ENCODE measurements at regions of chr6 and their contacts with region 1.

Region 1: DNA sequence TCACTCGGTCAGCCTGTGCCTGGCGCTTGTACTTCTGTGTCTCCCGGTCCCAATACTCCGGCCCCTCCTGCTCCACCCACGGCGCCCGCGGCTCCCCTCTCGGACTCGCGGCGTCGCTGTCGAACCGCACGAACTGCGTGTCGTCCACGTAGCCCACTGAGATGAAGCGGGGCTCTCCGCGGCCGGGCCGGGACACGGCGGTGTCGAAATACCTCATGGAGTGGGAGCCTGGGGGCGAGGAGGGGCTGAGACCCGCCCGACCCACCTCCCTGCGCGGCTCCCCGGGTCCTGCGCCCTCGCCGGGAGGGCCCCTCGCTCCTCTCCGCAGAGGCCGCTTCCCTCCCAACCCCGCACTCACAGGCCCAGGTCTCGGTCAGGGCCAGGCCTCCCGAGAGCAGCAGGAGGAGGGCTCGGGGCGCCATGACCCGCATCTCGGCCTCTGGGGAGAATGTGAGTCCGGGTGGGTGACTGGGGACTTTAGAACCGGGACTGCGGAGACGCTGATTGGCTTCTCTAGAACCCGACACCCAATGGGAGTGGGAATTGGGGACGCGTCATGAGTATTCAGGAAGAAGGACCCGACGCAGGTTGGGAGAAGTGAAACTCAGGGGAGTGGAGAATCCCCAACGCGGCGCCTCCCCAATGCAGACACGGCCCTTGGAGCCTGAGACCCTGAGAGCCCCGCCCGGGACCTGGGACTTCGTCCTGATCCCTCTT is at the start of gene HLA-C:
- DNase-seq: peak; percentile 95
- ATAC-seq: peak; percentile 88
- H3K4me3 ChIP-seq: peak within 1 kb of the TSS; percentile 83
- H3K27ac ChIP-seq: peak within 1 kb of the TSS; percentile 95
- H3K4me1 ChIP-seq: peaks cover 21% of the 10 kb centered on the region
- H3K27me3 ChIP-seq: no peaks in the 10 kb centered on the region
- CTCF ChIP-seq: peak in 1 of 3 experiments; percentile 10; a peak in 1 of 6 replicates
- EP300 ChIP-seq: no peak
- POLR2A ChIP-seq: peak; percentile 95
- RAD21 ChIP-seq: peak; percentile 30; the same call in 1 of the 2 replicates
- polyA plus RNA-seq, gene HLA-C: 121 to 379 TPM

Region 2: DNA sequence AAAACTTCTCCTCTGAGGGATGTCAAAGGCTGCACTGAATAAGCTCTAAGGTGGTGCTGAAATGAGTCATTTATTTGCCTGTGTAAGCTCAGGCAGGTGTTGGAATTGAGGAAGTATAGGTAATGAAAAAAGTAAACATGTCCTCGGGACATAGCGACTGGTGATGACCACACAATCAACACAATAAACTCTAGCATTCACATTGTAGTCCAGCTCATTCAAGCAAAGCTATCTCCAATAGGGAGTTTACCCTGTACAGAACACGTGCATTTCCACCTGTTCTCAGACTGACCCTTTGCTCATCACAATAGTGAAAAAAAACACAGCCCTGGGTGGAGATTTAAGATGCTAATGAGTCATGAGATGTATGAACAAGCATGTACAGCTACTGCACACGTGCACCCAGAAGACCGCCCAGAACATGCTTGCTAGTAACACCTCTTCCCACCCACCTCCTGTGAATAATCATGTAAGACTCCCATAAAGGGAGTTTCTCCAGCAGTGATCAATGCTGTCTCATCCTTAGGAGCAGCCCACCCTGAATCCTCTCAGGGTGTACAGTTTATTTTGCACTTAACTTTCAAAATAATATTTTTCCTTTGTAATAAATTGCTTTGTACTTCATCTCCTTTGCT is 68.3 kb before region 1 on chr6:
- CTCF ChIA-PET with region 1: no interaction called
- POLR2A ChIA-PET with region 1: interaction called, 3 read pairs
- RAD21 ChIA-PET with region 1: interaction called, 4 read pairs
- SMC1A ChIA-PET with region 1: interaction called, 10 read pairs
- in situ Hi-C with region 1: loop called (anchors 5 kb)
- intact Hi-C with region 1: no loop called
- DNase-seq: peak; percentile 86
- ATAC-seq: peak; percentile 79
- H3K4me3 ChIP-seq: peak overlapping the region; percentile 67
- H3K27ac ChIP-seq: peak overlapping the region; percentile 84
- H3K4me1 ChIP-seq: peaks cover 25% of the 10 kb centered on the region
- H3K27me3 ChIP-seq: no peaks in the 10 kb centered on the region
- CTCF ChIP-seq: no peak
- EP300 ChIP-seq: peak; percentile 85 to 86
- POLR2A ChIP-seq: no peak
- RAD21 ChIP-seq: no peak

Region 3: DNA sequence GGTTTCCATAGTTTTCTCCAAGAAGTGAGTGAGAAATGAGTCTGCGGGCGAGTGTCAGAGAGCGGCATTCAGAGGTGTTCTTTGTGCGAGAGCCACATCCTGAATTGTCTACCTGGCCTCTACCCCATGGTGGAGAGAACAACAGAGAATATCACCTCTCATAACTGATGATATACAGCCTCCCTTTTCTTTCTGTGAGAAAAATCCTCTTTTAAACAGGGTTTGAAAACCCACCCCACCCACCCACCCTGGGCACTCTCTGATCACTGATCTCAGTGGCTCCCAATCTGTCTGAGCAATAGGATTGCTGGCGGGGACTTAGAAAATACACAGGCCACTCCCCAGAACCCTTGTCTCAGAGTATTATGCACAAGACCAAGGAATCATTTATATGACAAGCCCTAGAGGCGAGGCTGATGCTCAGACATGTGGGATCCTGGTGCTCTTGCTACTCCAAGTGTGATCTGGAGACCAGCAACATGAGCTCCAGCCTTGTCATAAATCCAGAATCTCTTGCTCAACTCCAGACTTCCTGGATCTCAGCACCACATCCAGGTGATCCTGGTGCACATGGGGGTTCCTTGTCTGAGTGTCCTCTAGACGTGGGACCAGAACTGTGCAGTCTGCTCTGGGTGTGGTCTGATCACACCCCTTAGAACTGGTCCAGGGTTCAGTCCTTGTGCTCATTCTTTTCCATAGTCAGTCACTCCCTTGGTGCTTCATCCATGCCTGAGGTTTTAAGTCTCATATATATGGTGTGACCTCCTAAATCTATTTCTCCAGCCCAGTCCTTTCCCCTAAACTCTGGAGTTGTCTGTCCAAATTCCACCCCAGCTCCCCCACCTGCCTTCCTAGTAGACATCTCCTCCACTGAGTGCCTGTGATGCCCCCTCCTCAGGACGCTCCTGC is 79.9 kb after region 1 on chr6:
- CTCF ChIA-PET with region 1: no interaction called
- POLR2A ChIA-PET with region 1: no interaction called
- RAD21 ChIA-PET with region 1: no interaction called
- SMC1A ChIA-PET with region 1: interaction called, 3 read pairs
- in situ Hi-C with region 1: loop called (anchors 5 kb)
- intact Hi-C with region 1: loop called (anchors 2 kb)
- DNase-seq: no peak
- ATAC-seq: peak; percentile 22
- H3K4me3 ChIP-seq: no peak overlapping the region
- H3K27ac ChIP-seq: no peak overlapping the region
- H3K4me1 ChIP-seq: peaks cover 14% of the 10 kb centered on the region
- H3K27me3 ChIP-seq: no peaks in the 10 kb centered on the region
- CTCF ChIP-seq: no peak
- EP300 ChIP-seq: no peak
- POLR2A ChIP-seq: peak; percentile 47; the same call in 1 of the 2 replicates
- RAD21 ChIP-seq: no peak

Region 4: DNA sequence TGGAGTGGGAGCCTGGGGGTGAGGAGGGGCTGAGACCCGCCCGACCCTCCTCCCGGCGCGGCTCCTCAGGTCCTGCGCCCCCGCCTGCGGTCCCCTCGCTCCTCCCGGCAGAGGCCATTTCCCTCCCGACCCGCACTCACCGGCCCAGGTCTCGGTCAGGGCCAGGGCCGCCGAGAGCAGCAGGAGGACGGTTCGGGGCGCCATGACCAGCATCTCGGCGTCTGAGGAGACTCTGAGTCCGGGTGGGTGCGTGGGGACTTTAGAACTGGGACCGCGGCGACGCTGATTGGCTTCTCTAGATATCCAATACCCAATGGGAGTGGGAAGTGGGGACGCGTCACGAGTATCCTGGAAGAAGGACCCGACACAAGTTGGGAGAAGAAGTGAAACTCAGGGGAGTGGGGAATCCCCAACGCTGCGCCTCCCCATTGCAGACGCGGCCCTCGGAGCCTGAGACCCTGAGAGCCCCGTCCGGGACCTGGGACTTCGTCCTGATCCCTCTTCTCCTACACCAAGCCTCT is 85.2 kb after region 1 on chr6 and contains the start of gene HLA-B:
- CTCF ChIA-PET with region 1: interaction called, 3 read pairs
- POLR2A ChIA-PET with region 1: interaction called, 4 read pairs
- RAD21 ChIA-PET with region 1: no interaction called
- SMC1A ChIA-PET with region 1: interaction called, 3 read pairs
- in situ Hi-C with region 1: loop called (anchors 5 kb)
- intact Hi-C with region 1: loop called (anchors 2 kb)
- DNase-seq: peak; percentile 87
- ATAC-seq: peak; percentile 82
- H3K4me3 ChIP-seq: peak within 1 kb of the TSS; percentile 78
- H3K27ac ChIP-seq: peak within 1 kb of the TSS; percentile 99
- H3K4me1 ChIP-seq: peaks cover 14% of the 10 kb centered on the region
- H3K27me3 ChIP-seq: no peaks in the 10 kb centered on the region
- CTCF ChIP-seq: no peak
- EP300 ChIP-seq: no peak
- POLR2A ChIP-seq: peak; percentile 89
- RAD21 ChIP-seq: no peak
- polyA plus RNA-seq, gene HLA-B: 820 to 1,780 TPM

Region 5: DNA sequence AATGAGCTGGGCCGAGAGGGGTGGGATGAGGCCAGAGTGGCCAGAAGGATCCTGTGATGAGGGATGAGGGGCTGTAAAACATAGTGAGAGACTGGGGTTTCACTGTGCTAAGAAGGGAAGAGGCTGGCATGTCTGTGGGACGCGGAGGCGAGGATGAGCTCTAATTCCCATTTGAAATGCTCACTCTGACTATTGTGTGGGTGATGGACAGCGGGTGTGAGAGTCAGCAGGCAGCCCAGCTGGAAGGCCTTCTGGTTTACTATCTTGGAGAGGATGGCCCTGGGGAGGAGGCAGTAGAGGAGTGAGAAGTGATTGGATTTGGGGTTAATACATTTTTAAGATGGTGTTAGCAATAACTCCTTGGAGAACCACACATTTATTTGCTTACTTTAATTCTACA is 122.1 kb after region 1 on chr6:
- CTCF ChIA-PET with region 1: no interaction called
- POLR2A ChIA-PET with region 1: no interaction called
- RAD21 ChIA-PET with region 1: no interaction called
- SMC1A ChIA-PET with region 1: no interaction called
- in situ Hi-C with region 1: no loop called
- intact Hi-C with region 1: no loop called
- DNase-seq: no peak
- ATAC-seq: no peak
- H3K4me3 ChIP-seq: no peak overlapping the region
- H3K27ac ChIP-seq: no peak overlapping the region
- H3K4me1 ChIP-seq: no peaks in the 10 kb centered on the region; the same call in none of the 2 replicates
- H3K27me3 ChIP-seq: no peaks in the 10 kb centered on the region
- CTCF ChIP-seq: no peak
- EP300 ChIP-seq: no peak
- POLR2A ChIP-seq: no peak
- RAD21 ChIP-seq: no peak

Region 6: GRCh38 chr6:31462964-31463870 is 191.4 kb after region 1 on chr6:
- CTCF ChIA-PET with region 1: no interaction called
- POLR2A ChIA-PET with region 1: no interaction called
- RAD21 ChIA-PET with region 1: no interaction called
- SMC1A ChIA-PET with region 1: no interaction called
- in situ Hi-C with region 1: no loop called
- intact Hi-C with region 1: no loop called
- DNase-seq: peak; percentile 96
- ATAC-seq: peak; percentile 92
- H3K4me3 ChIP-seq: peak overlapping the region; percentile 98
- H3K27ac ChIP-seq: peak overlapping the region; percentile 89
- H3K4me1 ChIP-seq: peaks cover 11% of the 10 kb centered on the region
- H3K27me3 ChIP-seq: no peaks in the 10 kb centered on the region
- CTCF ChIP-seq: no peak
- EP300 ChIP-seq: no peak; a peak in 1 of 4 replicates
- POLR2A ChIP-seq: peak; percentile 96
- RAD21 ChIP-seq: no peak